GM12878 (cell line): ENCODE measurements at regions of chr10 and their contacts with region 1.

Region 1: DNA sequence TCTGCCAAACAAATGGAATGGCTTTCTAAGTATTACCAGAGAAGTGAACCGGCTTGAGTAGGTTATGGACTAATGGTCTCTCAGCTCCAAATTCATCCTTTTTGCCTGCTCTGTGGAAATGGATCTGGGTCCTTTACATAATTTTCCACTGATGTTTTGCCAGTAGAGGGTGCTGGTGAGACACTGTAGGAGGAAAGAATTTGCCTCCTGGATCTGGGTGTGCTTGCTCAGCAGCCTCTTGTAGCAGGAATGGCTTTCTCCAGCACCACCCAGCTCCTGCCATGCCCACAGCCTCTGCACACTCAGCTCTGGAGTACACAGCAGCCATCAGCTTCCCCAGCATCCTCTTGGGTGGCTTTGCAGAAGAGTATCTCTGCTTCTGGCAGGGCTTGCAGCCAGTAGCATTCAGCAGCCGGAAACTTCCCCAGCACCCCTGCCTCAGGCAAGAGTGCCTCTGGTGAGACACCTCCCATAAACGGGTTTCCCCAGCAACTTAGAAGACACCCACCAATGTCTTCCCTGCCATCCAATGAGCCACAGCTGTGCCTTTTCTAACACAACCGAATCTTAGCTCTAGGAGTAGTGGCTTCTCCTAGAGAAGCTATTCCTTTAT is 235.0 kb upstream of the PLPP4 start:
- DNase-seq: no peak
- ATAC-seq: peak; percentile 90
- H3K4me3 ChIP-seq: no peak overlapping the region
- H3K27ac ChIP-seq: no peak overlapping the region
- H3K4me1 ChIP-seq: no peaks in the 10 kb centered on the region
- H3K27me3 ChIP-seq: no peaks in the 10 kb centered on the region
- CTCF ChIP-seq: peak; percentile 49 to 66 (median 65)
- EP300 ChIP-seq: no peak
- POLR2A ChIP-seq: no peak
- RAD21 ChIP-seq: peak; percentile 58

Region 2: DNA sequence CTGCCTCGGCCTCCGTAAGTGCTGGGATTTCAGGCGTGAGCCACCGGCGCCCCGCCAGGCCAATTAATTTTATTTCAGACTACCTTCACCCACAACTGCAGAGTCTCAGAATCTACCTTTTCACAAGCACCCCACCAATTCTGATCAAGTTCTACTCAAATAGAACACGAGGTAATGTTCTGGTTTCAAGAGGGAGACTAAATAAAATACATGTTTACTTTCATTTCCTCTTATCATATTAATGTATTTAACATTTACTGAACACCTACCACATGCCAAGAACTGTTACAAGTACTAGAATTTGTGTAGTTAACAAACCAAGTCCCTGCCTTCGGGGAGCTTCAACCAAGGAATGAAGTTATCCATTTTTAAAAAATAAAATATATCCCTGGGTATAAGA is 654.0 kb before region 1 on chr10:
- CTCF ChIA-PET with region 1: no interaction called
- POLR2A ChIA-PET with region 1: no interaction called
- RAD21 ChIA-PET with region 1: no interaction called
- SMC1A ChIA-PET with region 1: no interaction called
- in situ Hi-C with region 1: no loop called
- intact Hi-C with region 1: no loop called
- DNase-seq: no peak
- ATAC-seq: peak; percentile 73
- H3K4me3 ChIP-seq: no peak overlapping the region
- H3K27ac ChIP-seq: no peak overlapping the region
- H3K4me1 ChIP-seq: peaks cover 7% of the 10 kb centered on the region
- H3K27me3 ChIP-seq: no peaks in the 10 kb centered on the region
- CTCF ChIP-seq: no peak
- EP300 ChIP-seq: no peak
- POLR2A ChIP-seq: no peak
- RAD21 ChIP-seq: no peak

Region 3: DNA sequence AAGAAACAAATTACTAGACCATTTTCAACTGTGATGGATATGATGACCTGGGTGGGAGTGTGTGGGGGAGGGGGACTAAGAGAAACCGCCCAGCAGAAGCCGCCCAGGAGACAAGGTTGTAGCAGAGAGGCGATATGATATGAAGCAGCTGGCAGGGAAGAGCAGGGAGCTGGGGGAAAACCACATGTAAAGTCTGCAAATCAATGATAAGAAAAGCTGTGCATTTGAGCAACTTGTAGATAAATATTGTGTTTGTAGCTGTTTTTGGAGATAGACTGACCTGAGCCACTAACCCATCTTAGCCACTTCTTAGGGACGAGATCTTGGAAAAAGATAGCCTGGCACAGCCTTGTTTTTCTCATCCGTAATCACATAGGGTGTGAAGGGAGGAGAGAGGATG is 76.9 kb before region 1 on chr10:
- CTCF ChIA-PET with region 1: no interaction called
- POLR2A ChIA-PET with region 1: no interaction called
- RAD21 ChIA-PET with region 1: no interaction called
- SMC1A ChIA-PET with region 1: no interaction called
- in situ Hi-C with region 1: no loop called
- intact Hi-C with region 1: no loop called
- DNase-seq: no peak
- ATAC-seq: no peak
- H3K4me3 ChIP-seq: no peak overlapping the region
- H3K27ac ChIP-seq: no peak overlapping the region
- H3K4me1 ChIP-seq: no peaks in the 10 kb centered on the region
- H3K27me3 ChIP-seq: no peaks in the 10 kb centered on the region
- CTCF ChIP-seq: no peak
- EP300 ChIP-seq: no peak
- POLR2A ChIP-seq: no peak
- RAD21 ChIP-seq: no peak

Region 4: GRCh38 chr10:120209124-120209762 is 12.7 kb before region 1 on chr10:
- CTCF ChIA-PET with region 1: interaction called, 31 read pairs
- POLR2A ChIA-PET with region 1: no interaction called
- RAD21 ChIA-PET with region 1: interaction called, 4 read pairs
- SMC1A ChIA-PET with region 1: interaction called, 7 read pairs
- in situ Hi-C with region 1: no loop called
- intact Hi-C with region 1: no loop called
- DNase-seq: no peak
- ATAC-seq: no peak
- H3K4me3 ChIP-seq: no peak overlapping the region
- H3K27ac ChIP-seq: no peak overlapping the region
- H3K4me1 ChIP-seq: no peaks in the 10 kb centered on the region
- H3K27me3 ChIP-seq: no peaks in the 10 kb centered on the region; a peak in 1 of 4 replicates
- CTCF ChIP-seq: no peak
- EP300 ChIP-seq: no peak
- POLR2A ChIP-seq: no peak
- RAD21 ChIP-seq: no peak

Region 5: GRCh38 chr10:120336911-120337540 is 115.0 kb after region 1 on chr10:
- CTCF ChIA-PET with region 1: interaction called, 44 read pairs
- POLR2A ChIA-PET with region 1: no interaction called
- RAD21 ChIA-PET with region 1: interaction called, 15 read pairs
- SMC1A ChIA-PET with region 1: interaction called, 21 read pairs
- in situ Hi-C with region 1: no loop called
- intact Hi-C with region 1: loop called (anchors 1 kb)
- DNase-seq: no peak
- ATAC-seq: peak; percentile 75
- H3K4me3 ChIP-seq: no peak overlapping the region
- H3K27ac ChIP-seq: no peak overlapping the region
- H3K4me1 ChIP-seq: no peaks in the 10 kb centered on the region
- H3K27me3 ChIP-seq: no peaks in the 10 kb centered on the region
- CTCF ChIP-seq: peak; percentile 77 to 81 (median 78)
- EP300 ChIP-seq: no peak
- POLR2A ChIP-seq: no peak
- RAD21 ChIP-seq: peak; percentile 51

Region 6: DNA sequence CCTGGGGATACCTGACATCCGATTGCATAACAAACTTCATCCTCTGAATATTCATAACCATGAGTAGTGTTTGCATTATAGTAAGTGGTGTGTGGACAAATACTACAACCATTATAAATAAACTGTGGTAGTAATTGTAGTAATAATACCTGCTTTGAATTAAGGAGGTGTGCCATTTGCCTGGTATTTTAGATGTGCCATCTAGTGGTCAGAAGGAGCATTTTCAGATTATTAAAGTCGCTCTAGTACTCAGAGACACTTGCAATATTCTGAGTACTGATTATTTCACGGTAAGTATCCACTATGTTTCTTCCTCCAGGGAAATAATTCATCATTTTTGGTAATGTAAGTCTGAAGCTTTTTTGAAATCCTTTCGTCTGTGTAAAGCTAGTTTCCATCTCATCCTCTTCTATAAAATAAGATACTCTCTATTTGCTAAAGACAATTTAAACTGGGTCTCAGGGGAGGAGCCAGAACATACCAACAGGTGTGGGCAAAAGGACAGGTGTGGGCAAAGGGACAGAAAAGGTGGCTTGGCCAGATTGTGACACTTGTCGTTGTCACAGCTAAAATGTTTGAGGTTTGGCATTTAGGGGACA is 513.9 kb after region 1 on chr10:
- CTCF ChIA-PET with region 1: interaction called, 4 read pairs
- POLR2A ChIA-PET with region 1: no interaction called
- RAD21 ChIA-PET with region 1: no interaction called
- SMC1A ChIA-PET with region 1: no interaction called
- in situ Hi-C with region 1: no loop called
- intact Hi-C with region 1: loop called (anchors 10 kb)
- DNase-seq: peak; percentile 7
- ATAC-seq: peak; percentile 85
- H3K4me3 ChIP-seq: no peak overlapping the region
- H3K27ac ChIP-seq: no peak overlapping the region
- H3K4me1 ChIP-seq: no peaks in the 10 kb centered on the region
- H3K27me3 ChIP-seq: no peaks in the 10 kb centered on the region
- CTCF ChIP-seq: peak; percentile 55 to 68 (median 56)
- EP300 ChIP-seq: no peak
- POLR2A ChIP-seq: no peak
- RAD21 ChIP-seq: peak; percentile 62